Gastrocnemius medialis (tissue), 4 donors: ENCODE measurements at regions of chr12 and their contacts with region 1.

Region 1: DNA sequence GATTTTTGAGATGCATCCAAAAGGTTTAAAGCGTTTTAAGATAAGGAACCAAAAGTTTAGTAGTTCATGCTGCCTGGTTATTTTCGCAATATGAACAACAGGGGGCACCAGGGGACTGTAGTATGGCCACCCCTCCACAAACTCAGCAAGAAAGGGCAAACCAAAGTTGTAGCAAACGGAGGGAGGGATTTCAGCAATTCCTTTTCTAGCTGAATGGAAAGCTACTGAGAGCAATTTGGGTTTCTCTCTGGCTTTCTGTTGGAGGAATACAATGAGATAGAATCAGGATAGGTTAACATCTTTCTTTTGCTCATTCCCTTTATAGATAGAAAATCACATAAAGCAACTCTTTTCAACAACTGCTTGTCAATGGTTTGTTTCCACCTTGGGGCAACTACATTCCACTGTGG is 62.5 kb downstream of the DRAM1 start:
- DNase-seq: peak; percentile 43 to 55
- ATAC-seq: peak; percentile 61 to 62
- H3K4me3 ChIP-seq: no peak overlapping the region
- H3K27ac ChIP-seq: peak overlapping the region; percentile 1 to 71 (median 40)
- H3K4me1 ChIP-seq: peaks cover 14 to 17% of the 10 kb centered on the region in 2 donors
- H3K27me3 ChIP-seq: no peaks in the 10 kb centered on the region
- CTCF ChIP-seq: peak; percentile 49 to 71 (median 55)
- POLR2A ChIP-seq: no peak

Region 2: DNA sequence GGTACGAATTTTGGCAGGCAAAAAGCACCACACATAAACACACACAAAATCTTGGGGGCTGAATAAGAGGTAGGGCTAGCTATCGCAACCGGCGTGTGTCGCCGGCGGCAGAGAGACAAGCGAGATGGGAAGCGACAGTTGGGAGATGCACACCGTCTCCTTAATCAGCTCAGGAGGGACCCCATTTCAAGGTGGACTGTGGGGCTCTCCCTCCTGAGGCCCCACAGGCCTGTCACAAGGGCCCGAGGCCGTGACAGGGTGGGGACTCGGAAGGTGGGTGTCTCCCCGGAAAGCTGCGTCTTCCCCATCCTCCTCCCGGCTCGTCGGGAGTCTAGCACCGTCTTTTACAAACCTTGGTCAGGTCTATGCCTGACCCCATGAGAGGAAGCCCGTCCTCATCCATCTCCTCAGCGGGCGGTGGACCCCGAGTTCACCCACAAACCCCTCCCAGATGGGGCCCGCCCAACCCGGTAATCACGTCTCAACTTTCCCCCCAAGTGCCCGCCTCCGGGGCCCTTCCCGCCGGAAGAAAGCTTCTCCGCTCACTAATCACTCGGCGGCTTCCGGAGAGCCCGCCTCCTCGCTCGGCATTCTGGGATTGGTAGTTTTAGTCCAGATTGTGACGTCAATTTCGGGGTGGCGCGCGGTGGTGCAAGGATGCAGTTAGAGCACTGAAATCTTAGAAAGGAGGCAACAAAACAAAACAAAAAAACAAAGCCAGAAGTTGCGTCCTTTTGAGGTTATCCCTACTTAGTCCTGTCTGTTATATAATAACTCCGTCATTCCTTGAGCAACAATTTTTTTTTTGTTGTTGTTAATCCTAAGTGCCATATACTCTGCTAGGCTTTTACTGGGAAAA is 121.9 kb after region 1 on chr12 and contains the start of gene WASHC3:
- in situ Hi-C with region 1: no loop called
- intact Hi-C with region 1: loop called (anchors 2 kb)
- DNase-seq: peak; percentile 92 to 93
- ATAC-seq: peak; percentile 97 to 98
- H3K4me3 ChIP-seq: peak within 1 kb of the TSS; percentile 88 to 95 (median 91)
- H3K27ac ChIP-seq: peak within 1 kb of the TSS; percentile 88 to 93 (median 90)
- H3K4me1 ChIP-seq: peaks cover 0 to 8% of the 10 kb centered on the region in 2 donors
- H3K27me3 ChIP-seq: no peaks in the 10 kb centered on the region
- CTCF ChIP-seq: no peak
- POLR2A ChIP-seq: peak; percentile 74 to 78
- total RNA-seq, gene WASHC3: 44.2 to 81.8 (median 62.2) TPM

Region 3: DNA sequence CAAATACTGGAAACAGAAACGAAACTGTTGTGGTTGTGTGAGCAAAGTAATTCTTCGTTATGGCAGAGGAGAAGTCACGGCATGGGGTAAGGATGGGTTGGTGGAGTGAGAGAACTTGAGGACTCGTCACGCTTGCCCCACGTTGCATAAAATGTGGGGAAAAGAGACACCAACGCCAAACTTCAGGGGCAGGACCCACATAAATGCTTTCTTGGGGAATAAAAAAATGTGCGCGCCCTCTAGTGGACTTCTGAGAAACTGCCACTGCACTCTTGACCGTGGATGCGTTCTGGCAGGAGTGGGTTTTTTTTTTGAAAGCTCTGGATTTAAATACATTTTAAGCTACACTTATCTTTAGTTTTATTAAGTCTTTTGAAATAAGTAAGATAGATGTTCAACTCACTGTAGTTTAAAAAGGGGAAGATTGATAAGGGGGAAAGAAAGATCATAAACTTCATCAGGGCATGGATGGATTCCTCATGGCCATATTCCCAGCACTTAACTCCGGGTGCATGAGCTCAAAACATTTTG is 544.6 kb after region 1 on chr12:
- in situ Hi-C with region 1: loop called (anchors 10 to 25 kb)
- intact Hi-C with region 1: loop called (anchors 5 kb)
- DNase-seq: peak; percentile 16 to 53
- ATAC-seq: peak; percentile 42 to 63
- H3K4me3 ChIP-seq: peak overlapping the region in 3 of 4 donors; percentile 7 to 34 (median 31)
- H3K27ac ChIP-seq: peak overlapping the region; percentile 4 to 61 (median 18)
- H3K4me1 ChIP-seq: peaks cover 12 to 20% of the 10 kb centered on the region in 2 donors
- H3K27me3 ChIP-seq: no peaks in the 10 kb centered on the region
- CTCF ChIP-seq: peak; percentile 70 to 95 (median 76)
- POLR2A ChIP-seq: no peak

Region 4: DNA sequence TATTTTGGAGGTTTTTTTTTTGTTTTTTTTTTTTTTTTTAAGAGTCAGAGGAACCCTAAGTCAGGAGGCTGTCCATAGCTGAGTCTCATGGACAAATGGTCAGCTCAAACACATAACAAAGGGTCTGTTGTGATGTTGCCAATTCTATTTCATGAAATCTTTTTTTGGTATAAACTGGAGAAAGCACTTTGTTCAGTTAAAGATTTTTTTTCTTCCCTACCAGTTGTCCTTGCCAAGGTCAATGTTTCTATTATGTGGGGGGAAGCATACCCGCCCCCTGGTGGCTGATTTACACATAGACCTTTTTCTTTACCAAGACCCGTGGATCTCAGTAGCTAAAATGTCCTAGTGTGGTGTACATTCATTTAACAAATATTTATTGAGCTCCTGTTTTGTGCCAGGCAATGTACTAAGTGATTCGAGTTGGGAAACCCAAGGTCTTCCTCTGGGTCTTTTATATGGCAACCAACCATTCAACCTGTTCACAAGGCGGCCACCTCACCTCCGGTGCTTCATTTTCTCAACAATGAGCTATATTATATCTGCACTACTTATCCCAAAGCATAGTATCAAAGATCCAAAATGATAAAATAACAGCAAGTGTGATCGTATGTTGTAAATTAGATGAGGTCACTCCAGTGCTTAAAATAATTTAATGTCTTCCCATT is 762.7 kb after region 1 on chr12:
- in situ Hi-C with region 1: no loop called
- intact Hi-C with region 1: loop called (anchors 5 kb)
- DNase-seq: peak in 1 of 2 donors; percentile 34
- ATAC-seq: no peak
- H3K4me3 ChIP-seq: no peak overlapping the region
- H3K27ac ChIP-seq: no peak overlapping the region
- H3K4me1 ChIP-seq: no peaks in the 10 kb centered on the region
- H3K27me3 ChIP-seq: no peaks in the 10 kb centered on the region
- CTCF ChIP-seq: peak in 4 of 5 experiments; percentile 36 to 54 (median 43)
- POLR2A ChIP-seq: no peak